Activated B cell treated with CpG ODN at 0.5 μM for 24 hours (primary cell): ENCODE measurements at regions of chr11 and their contacts with region 1.

Region 1: DNA sequence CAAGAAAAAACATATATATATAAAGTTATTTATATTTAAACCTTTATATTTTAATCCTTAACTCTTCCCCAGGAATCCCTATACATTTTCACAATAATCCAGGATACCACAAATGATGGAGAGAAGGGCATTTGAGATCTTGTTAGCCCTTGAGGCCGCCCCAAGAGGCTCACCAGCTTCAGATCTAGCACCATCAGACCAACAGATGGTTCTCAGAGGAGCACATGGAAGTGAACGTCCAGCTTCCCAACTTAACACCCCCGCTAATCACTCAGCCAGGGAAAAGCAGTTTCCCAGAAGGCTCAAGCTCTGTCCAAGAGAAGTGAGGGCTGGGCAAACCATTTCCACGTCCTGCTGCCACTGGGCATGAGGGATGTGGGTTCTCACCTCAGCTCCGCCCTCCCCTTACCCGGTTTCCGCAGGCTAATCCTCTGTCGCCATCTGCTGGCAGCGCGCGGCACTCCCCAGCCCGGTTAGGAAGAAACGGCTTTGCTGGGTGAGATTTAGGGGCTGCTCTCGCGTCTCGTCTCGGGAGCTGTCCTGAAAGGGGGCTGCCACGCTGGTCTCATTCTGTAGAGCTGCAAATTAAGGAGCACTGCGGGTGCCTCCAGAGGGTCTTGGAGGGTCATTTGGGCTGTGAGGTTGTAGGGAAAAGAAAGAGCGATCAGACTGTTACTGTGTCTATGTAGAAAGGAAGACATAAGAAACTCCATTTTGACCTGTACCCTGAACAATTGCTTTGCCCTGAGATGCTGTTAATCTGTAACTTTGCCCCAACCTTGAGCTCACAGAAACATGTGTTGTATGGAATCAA is 6.8 kb upstream of the FAM111A start:
- DNase-seq: peak; percentile 85
- ATAC-seq: peak; percentile 98
- H3K4me3 Mint-ChIP-seq: peak overlapping the region; percentile 69
- H3K27ac Mint-ChIP-seq: peak overlapping the region; percentile 88
- H3K4me1 Mint-ChIP-seq: peaks cover 25% of the 10 kb centered on the region
- H3K27me3 Mint-ChIP-seq: no peaks in the 10 kb centered on the region
- CTCF ChIP-seq: peak; percentile 91

Region 2: DNA sequence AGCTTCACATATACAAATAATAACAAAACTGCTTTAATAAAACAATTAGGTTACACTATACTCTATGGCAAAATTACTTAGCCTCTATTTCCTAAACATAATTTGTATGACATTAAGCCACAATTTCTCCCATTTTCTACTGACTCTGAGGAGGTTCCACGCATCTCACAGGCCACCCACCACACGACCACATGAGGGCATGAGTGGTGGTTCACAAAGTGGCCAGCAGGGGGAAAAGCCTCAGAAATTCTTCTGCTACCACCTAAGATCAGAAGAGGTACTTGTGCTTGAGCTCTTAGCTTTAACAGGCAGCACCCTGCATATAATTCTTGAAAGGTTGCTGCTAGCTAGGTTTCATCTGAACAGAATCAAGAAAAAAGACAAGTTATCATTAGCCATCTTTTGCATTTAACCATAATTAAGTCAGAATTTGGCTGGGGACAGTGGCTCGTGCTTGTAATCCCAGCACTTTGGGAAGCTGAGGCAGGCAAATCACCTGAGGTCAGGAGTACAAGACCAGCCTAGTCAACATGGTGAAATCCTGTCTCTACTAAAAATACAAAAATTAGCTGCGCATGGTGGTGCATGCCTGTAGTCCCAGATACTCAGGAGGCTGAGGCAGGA is 567.9 kb before region 1 on chr11:
- CTCF ChIA-PET with region 1: interaction called, 23 read pairs
- POLR2A ChIA-PET with region 1: no interaction called
- intact Hi-C with region 1: loop called (anchors 1 kb)
- DNase-seq: peak; percentile 54
- ATAC-seq: peak; percentile 99
- H3K4me3 Mint-ChIP-seq: no peak overlapping the region
- H3K27ac Mint-ChIP-seq: peak overlapping the region; percentile 36
- H3K4me1 Mint-ChIP-seq: peaks cover 40% of the 10 kb centered on the region
- H3K27me3 Mint-ChIP-seq: no peaks in the 10 kb centered on the region
- CTCF ChIP-seq: peak; percentile 53

Region 3: DNA sequence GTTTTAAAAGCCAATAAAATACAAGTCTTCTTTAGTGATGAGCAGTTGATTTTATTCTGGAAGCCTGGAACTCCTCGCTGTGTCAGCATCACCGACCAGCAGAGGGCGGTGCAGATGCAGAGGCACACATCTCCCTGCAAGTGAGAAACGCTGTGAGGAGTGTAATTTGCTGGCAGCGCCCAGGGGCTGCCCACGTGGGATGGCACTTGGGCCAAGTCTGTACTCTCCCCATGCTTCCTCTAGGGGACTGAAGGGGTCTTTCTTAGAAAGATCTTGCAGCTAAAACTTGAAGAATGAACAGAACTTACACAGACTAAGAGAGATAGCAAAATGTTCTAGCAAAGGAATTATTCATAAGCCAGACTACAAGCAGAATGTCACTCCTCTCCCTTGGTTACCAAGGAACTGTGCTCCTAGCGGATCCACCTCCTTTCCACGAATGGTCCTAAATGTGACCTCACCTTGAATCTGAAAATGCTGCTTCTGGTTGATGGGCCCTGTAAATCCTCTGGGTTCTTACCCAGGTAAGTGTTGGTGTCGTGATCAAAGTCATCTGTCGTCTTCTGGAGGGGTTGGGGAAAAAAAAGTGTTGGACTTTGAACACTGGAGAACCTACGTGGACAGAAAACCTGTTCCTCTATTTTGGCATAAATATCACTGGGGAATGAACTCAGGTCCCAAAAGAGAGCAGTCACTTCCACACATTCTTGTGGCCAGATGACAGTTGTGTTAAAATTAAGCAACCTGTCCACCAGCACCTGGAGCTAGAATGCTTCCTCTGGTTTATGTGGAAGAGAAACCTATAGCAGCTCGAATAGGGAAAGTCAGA is 481.6 kb before region 1 on chr11:
- CTCF ChIA-PET with region 1: interaction called, 24 read pairs
- POLR2A ChIA-PET with region 1: interaction called, 5 read pairs
- intact Hi-C with region 1: loop called (anchors 1 kb)
- DNase-seq: peak; percentile 69
- ATAC-seq: peak; percentile 99
- H3K4me3 Mint-ChIP-seq: no peak overlapping the region
- H3K27ac Mint-ChIP-seq: no peak overlapping the region
- H3K4me1 Mint-ChIP-seq: peaks cover 5% of the 10 kb centered on the region
- H3K27me3 Mint-ChIP-seq: no peaks in the 10 kb centered on the region
- CTCF ChIP-seq: peak; percentile 25

Region 4: GRCh38 chr11:58845366-58845765 is 290.5 kb before region 1 on chr11:
- CTCF ChIA-PET with region 1: no interaction called
- POLR2A ChIA-PET with region 1: no interaction called
- intact Hi-C with region 1: loop called (anchors 2 kb)
- DNase-seq: no peak
- ATAC-seq: no peak
- H3K4me3 Mint-ChIP-seq: no peak overlapping the region
- H3K27ac Mint-ChIP-seq: no peak overlapping the region
- H3K4me1 Mint-ChIP-seq: peaks cover 3% of the 10 kb centered on the region
- H3K27me3 Mint-ChIP-seq: no peaks in the 10 kb centered on the region
- CTCF ChIP-seq: no peak

Region 5: DNA sequence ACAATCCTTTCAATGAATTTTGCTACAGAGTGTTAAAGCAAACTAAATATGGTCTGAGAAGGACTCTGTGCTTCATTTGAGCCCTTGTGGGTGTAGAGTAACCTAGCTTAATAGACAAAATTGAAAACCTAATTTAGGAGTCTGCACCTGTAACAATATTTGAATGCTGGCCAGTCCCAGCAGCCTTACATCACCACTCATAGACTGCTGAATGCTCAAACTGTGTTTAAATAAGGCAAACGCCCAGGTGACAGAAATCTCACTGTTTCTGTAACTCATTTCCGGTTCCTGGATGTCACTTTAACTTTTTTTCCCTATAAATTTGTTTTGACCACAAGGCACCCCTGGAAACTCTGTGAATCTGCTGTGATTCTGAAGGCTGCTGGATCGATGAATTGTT is 95.2 kb before region 1 on chr11:
- CTCF ChIA-PET with region 1: no interaction called
- POLR2A ChIA-PET with region 1: no interaction called
- intact Hi-C with region 1: no loop called
- DNase-seq: no peak
- ATAC-seq: no peak
- H3K4me3 Mint-ChIP-seq: no peak overlapping the region
- H3K27ac Mint-ChIP-seq: no peak overlapping the region
- H3K4me1 Mint-ChIP-seq: peaks cover 14% of the 10 kb centered on the region
- H3K27me3 Mint-ChIP-seq: no peaks in the 10 kb centered on the region
- CTCF ChIP-seq: no peak

Region 6: DNA sequence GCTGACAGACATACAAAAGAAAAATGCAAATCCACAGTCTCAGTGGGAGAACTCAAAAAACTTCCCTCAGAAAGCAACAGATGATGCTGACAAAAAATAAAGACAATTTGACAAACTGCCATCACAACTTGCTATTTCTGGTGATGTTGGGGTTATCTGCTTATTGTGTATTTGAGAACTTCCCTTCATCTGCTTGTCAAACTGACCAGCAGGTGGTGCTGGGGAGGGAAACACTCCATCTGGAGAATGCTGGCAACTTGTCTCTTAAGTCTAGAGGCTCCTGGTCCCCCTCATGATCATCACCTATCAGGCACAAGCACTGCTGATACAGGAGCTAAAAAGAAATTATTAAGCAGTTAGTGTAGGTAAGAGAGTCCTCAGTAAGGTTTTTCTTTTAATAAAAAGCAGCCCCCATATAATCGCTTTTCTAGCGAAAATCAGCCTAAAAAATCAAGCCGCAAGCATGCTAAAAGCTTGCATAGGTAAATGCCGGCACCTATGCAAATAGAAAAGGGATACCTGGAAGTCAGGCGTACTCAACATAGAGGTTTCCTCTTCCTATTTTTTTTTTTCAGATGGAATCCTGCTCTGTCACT is 38.6 kb before region 1 on chr11:
- CTCF ChIA-PET with region 1: interaction called, 29 read pairs
- POLR2A ChIA-PET with region 1: interaction called, 7 read pairs
- intact Hi-C with region 1: loop called (anchors 1 kb)
- DNase-seq: no peak
- ATAC-seq: peak; percentile 23
- H3K4me3 Mint-ChIP-seq: peak overlapping the region; percentile 73
- H3K27ac Mint-ChIP-seq: peak overlapping the region; percentile 91
- H3K4me1 Mint-ChIP-seq: peaks cover 91% of the 10 kb centered on the region
- H3K27me3 Mint-ChIP-seq: no peaks in the 10 kb centered on the region
- CTCF ChIP-seq: no peak

Region 7: GRCh38 chr11:59152312-59152951 is 16.6 kb after region 1 on chr11:
- CTCF ChIA-PET with region 1: interaction called, 97 read pairs
- POLR2A ChIA-PET with region 1: interaction called, 4 read pairs
- intact Hi-C with region 1: no loop called
- DNase-seq: no peak
- ATAC-seq: peak; percentile 45
- H3K4me3 Mint-ChIP-seq: peak overlapping the region; percentile 65
- H3K27ac Mint-ChIP-seq: peak overlapping the region; percentile 79
- H3K4me1 Mint-ChIP-seq: peaks cover 57% of the 10 kb centered on the region
- H3K27me3 Mint-ChIP-seq: no peaks in the 10 kb centered on the region
- CTCF ChIP-seq: no peak